Psoas muscle (tissue), 8 donors: ENCODE measurements at regions of chr2 and their contacts with region 1.

Region 1: DNA sequence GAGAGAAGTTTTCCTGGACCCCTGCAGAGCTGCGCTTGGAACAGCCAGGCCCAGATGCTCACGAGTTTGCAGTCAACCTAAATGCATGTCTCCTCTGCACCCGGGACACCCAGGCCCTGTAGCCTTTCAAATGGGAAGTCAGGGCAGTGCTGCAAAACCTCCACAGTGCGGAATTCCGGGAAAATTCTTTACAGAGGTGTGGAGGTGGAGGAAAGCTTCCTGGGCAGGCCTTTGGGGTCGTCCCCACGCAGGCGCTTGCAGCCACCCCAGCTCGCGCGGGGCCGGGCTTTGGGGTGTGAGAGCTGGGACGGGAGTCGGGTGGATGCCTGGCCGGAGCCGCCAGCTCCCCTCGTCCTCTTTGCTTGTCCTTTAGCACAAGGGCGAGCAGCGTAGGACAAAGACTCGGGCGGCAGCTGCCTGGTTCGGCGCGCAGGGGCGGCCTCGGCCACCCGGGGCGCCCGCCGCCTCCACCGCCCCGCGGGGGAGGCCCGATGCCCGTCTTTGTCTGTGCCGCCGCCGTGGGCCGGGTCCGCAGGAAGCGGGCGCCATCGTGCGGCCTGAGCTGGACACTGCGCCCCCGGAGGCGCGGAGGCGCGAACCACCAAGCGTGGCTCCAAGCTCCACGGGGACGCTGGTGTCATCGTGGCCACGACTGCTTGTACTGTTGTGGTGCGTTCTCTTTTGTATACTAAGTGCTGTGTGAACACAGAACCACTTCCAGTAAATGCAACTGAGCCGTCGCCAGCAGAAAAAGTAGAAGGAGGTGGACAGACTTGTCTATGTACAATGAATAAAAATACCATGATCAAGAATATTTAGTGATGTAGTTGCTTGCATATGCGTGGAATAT is 28.2 kb upstream of the BCL11A start:
- DNase-seq: peak; percentile 56 to 77
- ATAC-seq: peak; percentile 89 to 95 (median 94)
- H3K4me3 ChIP-seq: peak overlapping the region; percentile 55
- H3K27ac ChIP-seq: no peak overlapping the region
- H3K4me1 ChIP-seq: no peaks in the 10 kb centered on the region
- H3K27me3 ChIP-seq: peaks cover 0 to 9% (median 3%) of the 10 kb centered on the region in 3 donors
- CTCF ChIP-seq: peak; percentile 87

Region 2: DNA sequence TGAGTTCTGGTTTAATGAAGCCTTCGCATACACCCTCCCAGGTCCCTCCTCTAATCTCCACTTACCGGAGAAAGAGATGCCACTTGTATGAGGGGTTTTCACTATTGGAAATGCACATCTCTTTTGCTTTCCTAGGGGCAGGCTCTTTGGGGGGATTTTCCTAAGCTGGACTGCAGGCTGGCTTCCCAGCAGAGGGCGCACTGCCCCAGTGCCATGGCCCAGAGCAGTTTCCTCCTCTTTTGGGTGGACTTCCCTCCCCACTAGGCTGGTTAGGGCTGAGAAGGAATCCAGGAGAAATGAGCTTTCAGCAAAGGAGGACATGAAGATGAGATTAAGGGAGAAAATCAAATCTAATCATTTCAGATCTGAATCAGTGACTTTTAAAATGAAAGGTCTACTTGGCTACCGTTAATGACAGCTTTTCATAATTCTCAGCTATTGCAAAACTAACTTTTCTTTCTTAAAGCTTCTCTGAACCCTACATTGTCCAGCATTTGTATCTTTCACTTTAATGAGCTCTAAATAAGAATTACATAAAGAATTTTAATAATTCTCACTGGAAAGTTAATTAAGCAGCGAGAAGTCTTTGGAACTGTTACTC is 1556.4 kb before region 1 on chr2:
- intact Hi-C with region 1: loop called in 1 of 2 experiments (anchors 10 kb)
- DNase-seq: peak in 1 of 2 donors; percentile 12
- ATAC-seq: no peak
- H3K4me3 ChIP-seq: no peak overlapping the region
- H3K27ac ChIP-seq: no peak overlapping the region
- H3K4me1 ChIP-seq: no peaks in the 10 kb centered on the region
- H3K27me3 ChIP-seq: no peaks in the 10 kb centered on the region
- CTCF ChIP-seq: peak; percentile 42

Region 3: DNA sequence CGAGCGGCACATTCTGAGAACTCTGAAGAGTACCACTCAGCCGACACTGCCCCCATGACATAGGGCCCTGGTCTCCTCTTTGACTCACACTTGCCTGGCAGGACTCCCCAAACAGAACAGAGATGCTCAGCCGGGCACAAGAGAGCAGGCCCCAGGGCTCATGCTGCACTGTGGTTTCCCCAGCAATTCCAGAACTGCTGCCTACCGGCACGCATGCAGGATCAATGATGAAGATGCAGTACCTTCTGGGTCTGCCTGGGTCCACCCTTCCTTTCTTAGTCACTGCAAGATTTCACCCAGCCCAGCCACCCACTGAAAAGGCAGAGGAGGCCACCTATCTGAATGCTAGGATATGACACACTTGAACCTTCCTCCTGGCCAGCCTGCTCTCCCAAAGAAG is 77.6 kb before region 1 on chr2:
- intact Hi-C with region 1: no loop called
- DNase-seq: no peak
- ATAC-seq: no peak
- H3K4me3 ChIP-seq: no peak overlapping the region
- H3K27ac ChIP-seq: no peak overlapping the region
- H3K4me1 ChIP-seq: no peaks in the 10 kb centered on the region
- H3K27me3 ChIP-seq: peaks cover 0 to 6% (median 2%) of the 10 kb centered on the region in 3 donors
- CTCF ChIP-seq: no peak

Region 4: DNA sequence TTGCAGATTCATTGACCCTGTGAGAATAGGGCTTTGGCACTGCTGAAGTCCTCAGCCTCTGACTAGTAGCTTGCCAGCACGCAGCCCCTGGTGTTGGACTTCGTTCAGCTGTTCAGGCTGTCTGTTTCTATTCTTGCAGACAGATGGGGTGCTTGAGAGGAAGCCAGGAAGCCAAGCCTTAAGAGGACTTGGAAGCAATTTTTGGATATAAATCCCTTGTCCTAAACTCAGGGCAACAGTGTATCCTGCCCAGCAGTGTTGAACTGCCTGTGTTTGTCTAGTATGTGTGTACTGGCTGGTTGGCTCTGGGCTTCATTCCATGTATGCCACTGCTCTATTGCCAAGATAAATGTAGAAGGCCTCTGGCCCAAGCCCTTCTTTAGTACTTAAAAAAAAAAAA is 1432.4 kb after region 1 on chr2:
- intact Hi-C with region 1: no loop called
- DNase-seq: peak; percentile 34 to 60
- ATAC-seq: peak; percentile 69 to 83 (median 74)
- H3K4me3 ChIP-seq: no peak overlapping the region
- H3K27ac ChIP-seq: peak overlapping the region; percentile 0
- H3K4me1 ChIP-seq: peaks cover 12% of the 10 kb centered on the region
- H3K27me3 ChIP-seq: no peaks in the 10 kb centered on the region
- CTCF ChIP-seq: peak; percentile 30